ENCODE measurements at regions of chr15 and their contacts with region 1.

Region 1: DNA sequence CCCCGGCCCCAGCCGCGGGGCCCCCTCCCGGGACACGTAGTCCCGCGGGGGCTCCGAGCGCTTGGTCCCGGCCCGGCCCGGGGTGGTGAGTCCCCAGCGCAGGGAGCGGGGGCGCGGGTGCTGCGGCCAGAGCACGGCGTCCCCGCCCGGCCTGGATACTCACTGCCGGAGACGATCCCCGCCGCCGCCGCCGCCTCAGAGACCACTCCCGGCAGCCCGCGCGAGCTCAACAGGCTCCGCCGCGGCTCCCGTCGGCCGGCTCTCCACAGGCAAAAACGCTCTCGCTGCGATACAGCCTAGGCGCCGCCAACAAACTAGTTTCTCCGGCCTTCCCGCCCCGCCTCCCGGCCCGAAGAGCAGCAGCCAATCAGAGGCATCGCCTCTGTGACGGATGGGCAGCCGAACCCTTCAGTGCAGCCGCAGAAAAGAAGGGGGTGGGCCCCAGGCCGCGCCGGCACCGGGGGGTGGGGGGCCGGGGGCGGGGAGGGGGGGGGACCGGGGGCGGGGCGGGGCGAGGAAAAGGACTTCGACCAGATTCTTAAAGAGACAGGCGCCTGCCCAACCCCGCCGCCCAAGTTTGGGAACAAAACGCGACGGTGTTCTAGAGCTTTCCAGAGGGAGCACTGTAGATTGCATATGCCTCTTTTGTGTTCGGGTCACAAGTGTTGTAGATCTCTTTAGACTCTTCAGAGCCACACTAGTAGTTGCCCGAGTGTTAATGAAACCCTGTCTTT is at the start of gene KLHL25:
- DNase-seq: peak; percentile 95
- H3K4me3 Mint-ChIP-seq: peak within 1 kb of the TSS; percentile 80
- H3K27ac Mint-ChIP-seq: peak within 1 kb of the TSS; percentile 32
- H3K4me1 Mint-ChIP-seq: peaks cover 22% of the 10 kb centered on the region
- H3K27me3 Mint-ChIP-seq: no peaks in the 10 kb centered on the region
- CTCF ChIP-seq: no peak
- total RNA-seq, gene KLHL25: 3.1 and 3.3 TPM in 2 replicates

Region 2: GRCh38 chr15:85710340-85710842 is 84.4 kb before region 1 on chr15:
- CTCF ChIA-PET with region 1: no interaction called
- POLR2A ChIA-PET with region 1: no interaction called
- intact Hi-C with region 1: no loop called
- DNase-seq: no peak
- H3K4me3 Mint-ChIP-seq: no peak overlapping the region
- H3K27ac Mint-ChIP-seq: no peak overlapping the region
- H3K4me1 Mint-ChIP-seq: peaks cover 4% of the 10 kb centered on the region
- H3K27me3 Mint-ChIP-seq: no peaks in the 10 kb centered on the region
- CTCF ChIP-seq: no peak

Region 3: DNA sequence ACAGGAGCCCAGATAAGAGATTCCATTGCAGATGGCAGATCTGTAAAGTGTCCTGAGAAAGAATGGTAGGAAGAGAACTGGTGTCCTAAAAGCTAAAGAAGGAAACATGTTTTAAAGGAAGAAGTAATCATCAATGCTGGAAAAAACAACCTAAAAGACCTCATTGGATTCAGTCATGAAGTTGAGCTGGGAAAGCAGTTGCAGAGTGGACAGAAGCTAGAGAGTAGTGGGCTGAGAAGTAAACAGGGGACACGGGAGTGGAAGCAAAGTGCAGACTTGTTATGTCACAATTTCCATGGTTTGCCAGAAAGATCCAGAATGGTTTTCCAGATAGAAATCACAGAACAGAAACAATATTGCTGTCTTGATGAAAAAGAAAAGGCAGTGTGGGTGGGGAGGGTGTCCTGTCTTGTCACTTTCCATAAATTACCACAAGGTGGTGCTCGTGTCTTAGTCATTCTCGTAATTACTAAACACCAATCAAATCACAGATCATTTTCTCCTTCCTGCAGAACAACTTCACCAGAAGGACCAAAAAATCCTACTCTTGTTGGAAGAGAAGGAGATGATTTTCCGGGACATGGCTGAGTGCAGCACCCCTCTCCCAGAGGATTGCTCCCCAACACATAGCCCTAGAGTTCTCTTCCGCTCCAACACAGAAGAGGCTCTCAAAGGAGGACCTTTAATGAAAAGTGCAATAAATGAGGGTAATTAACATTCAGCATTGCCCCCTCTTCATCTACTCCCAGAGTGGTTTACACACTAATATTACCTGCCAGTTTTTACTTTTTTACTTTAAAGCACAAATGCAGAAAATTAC is 64.6 kb before region 1 on chr15:
- CTCF ChIA-PET with region 1: interaction called, 7 read pairs
- POLR2A ChIA-PET with region 1: no interaction called
- intact Hi-C with region 1: loop called (anchors 1 kb)
- DNase-seq: peak; percentile 75
- H3K4me3 Mint-ChIP-seq: no peak overlapping the region
- H3K27ac Mint-ChIP-seq: no peak overlapping the region
- H3K4me1 Mint-ChIP-seq: peaks cover 26% of the 10 kb centered on the region
- H3K27me3 Mint-ChIP-seq: no peaks in the 10 kb centered on the region
- CTCF ChIP-seq: peak; percentile 72

Measured in MCF 10A (cell line).